Activated T-helper 1 cell treated with anti-CD3 and anti-CD28 coated beads, Interleukin-12 subunit alpha, Interleukin-12 subunit beta, Interleukin-2, Interleukin-4 antibody, amounts not matched to agents 30 ng/mL and 10 ng/mL and 1 ng/mL, durations not matched to agents 14 hours and 24 hours and 36 hours (primary cell): ENCODE measurements at regions of chr2 and their contacts with region 1.

Region 1: DNA sequence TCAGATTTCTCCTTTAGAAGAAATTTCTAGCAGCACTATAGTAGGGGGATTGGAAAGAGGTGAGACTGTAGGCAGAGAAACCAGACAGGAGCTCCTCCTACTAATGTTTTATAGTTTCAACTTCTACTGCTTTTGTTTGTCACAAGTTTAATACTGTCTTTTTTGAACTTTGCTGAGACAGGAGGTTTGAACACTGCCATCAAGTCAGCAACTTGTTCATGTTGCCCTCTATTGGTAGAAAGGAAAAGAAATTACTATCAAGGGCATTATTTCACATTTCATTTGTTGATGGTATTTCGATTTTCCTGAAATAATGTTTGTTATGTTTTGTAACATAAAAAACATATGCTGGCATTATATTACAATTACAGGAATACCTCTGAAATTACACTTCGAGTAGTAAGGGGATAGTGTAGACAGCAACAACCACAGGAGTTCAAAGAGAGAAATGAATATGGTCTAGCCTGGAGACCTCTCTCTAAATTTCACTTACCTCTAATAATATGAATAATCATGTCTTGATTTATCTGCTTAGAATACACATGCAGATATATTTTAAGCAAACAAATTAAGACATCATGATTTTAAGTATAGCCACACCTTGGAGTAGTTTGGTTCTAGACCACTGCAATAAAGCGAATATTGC is 12.4 kb upstream of the CCDC88A start:
- DNase-seq: no peak
- H3K4me3 Mint-ChIP-seq: no peak overlapping the region
- H3K27ac Mint-ChIP-seq: no peak overlapping the region
- H3K4me1 Mint-ChIP-seq: peaks cover 11% of the 10 kb centered on the region
- H3K27me3 Mint-ChIP-seq: peaks cover 9% of the 10 kb centered on the region

Region 2: DNA sequence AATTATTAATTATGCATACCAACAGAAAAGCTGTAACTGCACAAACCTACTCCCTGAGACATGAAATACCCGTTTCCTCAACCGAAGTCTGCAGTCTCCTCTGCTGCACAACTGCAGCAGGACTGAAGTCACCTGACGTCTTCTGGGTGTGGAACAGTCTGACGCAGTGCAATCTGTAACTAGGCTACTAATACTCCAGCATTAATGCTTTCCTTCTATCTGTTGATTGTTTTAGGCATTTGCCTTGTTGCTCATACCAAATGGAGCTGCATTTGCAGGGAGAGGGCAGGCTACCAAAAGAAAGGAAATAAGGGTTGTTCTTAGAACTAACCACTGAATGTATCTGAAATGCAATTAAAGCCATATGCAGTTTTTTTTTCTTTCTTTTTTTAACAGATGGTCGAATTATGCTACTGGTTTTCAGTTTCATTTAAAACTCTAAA is 421.9 kb before region 1 on chr2:
- intact Hi-C with region 1: loop called (anchors 5 kb)
- DNase-seq: peak; percentile 20
- H3K4me3 Mint-ChIP-seq: peak overlapping the region; percentile 83
- H3K27ac Mint-ChIP-seq: peak overlapping the region; percentile 35
- H3K4me1 Mint-ChIP-seq: peaks cover 42% of the 10 kb centered on the region
- H3K27me3 Mint-ChIP-seq: no peaks in the 10 kb centered on the region